ENCODE measurements at regions of chr3 and their contacts with region 1.

Region 1: DNA sequence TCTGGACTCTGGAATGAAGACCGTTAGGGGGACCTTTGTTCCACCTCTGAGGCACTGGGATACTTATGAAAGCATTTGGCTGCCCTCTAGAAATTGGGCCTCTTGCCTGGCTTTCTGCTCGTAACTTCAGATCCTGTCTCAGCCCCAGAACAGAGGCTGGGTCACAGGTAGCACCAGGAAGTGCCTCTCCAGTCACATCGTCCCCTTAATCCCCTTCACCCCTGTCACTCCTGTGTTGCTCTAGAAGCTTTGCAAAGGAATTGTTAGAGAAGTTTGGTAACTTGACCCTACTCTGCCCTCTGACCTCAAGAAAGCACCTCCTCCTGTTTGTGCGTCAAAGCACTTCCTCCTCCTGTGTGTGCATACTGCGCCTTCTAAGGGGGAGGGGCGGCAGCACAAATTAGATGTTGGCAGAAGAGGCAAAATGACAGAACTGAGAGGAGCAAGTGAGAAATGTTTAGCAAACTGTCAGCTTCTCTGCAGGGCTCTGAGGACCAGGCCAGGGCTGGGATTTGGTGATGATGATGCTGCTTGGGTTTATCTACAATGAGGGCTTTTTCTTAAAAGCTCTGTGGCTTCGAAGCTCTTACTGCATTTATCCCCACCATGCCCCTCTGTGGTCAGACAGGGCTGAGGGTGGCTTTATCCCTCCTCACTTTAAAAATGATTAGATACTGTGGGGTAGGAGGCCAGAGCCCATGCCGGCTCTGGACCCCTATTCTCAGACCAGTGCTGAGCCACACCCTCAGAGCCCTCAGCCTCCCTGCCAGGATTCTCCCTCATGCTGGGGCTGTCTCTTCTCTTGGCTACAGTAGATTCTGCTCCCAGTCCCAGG is 76.2 kb downstream of the LARS2 start:
- DNase-seq: peak; percentile 8
- H3K4me3 Mint-ChIP-seq: no peak overlapping the region
- H3K27ac Mint-ChIP-seq: no peak overlapping the region
- H3K4me1 Mint-ChIP-seq: peaks cover 33% of the 10 kb centered on the region
- H3K27me3 Mint-ChIP-seq: no peaks in the 10 kb centered on the region

Region 2: DNA sequence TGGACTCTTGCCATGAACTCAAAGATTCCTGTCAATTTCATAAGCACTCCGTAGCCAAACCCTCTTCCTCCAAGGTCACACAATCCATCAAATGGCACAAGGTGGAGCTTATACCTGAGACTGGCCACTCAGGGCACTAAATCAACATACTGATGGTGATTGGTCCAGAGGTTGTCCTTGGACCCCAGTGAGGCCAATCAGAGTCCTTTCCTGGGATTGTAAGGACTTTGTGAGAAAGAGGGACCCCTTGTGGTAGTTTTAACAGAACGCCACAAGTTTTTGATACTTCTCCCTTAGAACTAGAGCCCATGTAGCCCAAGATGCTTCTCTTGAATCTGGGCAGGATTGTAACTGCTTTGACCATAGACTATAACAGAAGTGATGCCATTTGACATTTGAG is 120.6 kb before region 1 on chr3:
- intact Hi-C with region 1: no loop called
- DNase-seq: no peak
- H3K4me3 Mint-ChIP-seq: no peak overlapping the region
- H3K27ac Mint-ChIP-seq: no peak overlapping the region
- H3K4me1 Mint-ChIP-seq: no peaks in the 10 kb centered on the region
- H3K27me3 Mint-ChIP-seq: peaks cover 26% of the 10 kb centered on the region

Region 3: DNA sequence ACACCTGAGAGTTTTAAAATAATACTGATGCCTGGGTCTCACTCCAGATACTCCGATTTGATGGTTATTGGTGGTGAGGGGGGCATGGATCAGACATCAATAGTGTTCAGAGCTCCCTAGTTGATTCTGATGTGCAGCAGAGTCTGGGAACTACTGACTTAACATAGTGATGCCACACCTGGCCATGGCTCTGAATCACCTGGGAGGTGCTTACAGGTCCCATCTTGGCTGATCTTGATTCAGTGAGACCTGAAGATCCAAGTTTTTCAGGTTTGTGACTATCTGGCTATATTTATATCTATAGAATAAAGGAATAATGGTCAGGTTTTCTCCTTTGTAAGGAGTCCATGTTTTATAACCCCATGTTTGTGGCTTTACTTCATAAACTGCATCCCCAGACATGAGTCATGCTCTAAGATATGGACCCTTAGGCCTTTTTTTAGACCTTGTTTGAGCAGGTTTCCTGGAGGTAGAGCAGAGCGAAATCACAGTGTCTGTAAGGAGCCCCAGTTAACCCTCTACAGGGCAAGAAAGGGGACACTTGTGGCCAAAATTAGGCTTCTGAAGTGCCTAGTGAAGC is 25.3 kb after region 1 on chr3:
- intact Hi-C with region 1: loop called (anchors 2 kb)
- DNase-seq: no peak
- H3K4me3 Mint-ChIP-seq: no peak overlapping the region
- H3K27ac Mint-ChIP-seq: no peak overlapping the region
- H3K4me1 Mint-ChIP-seq: peaks cover 11% of the 10 kb centered on the region
- H3K27me3 Mint-ChIP-seq: no peaks in the 10 kb centered on the region

Region 4: GRCh38 chr3:45746777-45747622 is 282.4 kb after region 1 on chr3:
- intact Hi-C with region 1: no loop called
- DNase-seq: no peak
- H3K4me3 Mint-ChIP-seq: no peak overlapping the region
- H3K27ac Mint-ChIP-seq: no peak overlapping the region
- H3K4me1 Mint-ChIP-seq: peaks cover 5% of the 10 kb centered on the region
- H3K27me3 Mint-ChIP-seq: no peaks in the 10 kb centered on the region